ENCODE measurements at regions of chr11 and their contacts with region 1.

Region 1: GRCh38 chr11:92941676-92942571 is 27.5 kb upstream of the MTNR1B start:
- DNase-seq: peak; percentile 71
- H3K4me3 Mint-ChIP-seq: no peak overlapping the region
- H3K27ac Mint-ChIP-seq: no peak overlapping the region
- H3K4me1 Mint-ChIP-seq: no peaks in the 10 kb centered on the region
- H3K27me3 Mint-ChIP-seq: no peaks in the 10 kb centered on the region
- CTCF ChIP-seq: peak; percentile 78

Region 2: GRCh38 chr11:92870196-92870832 is 71.6 kb before region 1 on chr11:
- CTCF ChIA-PET with region 1: no interaction called
- POLR2A ChIA-PET with region 1: no interaction called
- intact Hi-C with region 1: no loop called
- DNase-seq: no peak
- H3K4me3 Mint-ChIP-seq: no peak overlapping the region
- H3K27ac Mint-ChIP-seq: no peak overlapping the region
- H3K4me1 Mint-ChIP-seq: peaks cover 3% of the 10 kb centered on the region
- H3K27me3 Mint-ChIP-seq: no peaks in the 10 kb centered on the region
- CTCF ChIP-seq: no peak

Region 3: DNA sequence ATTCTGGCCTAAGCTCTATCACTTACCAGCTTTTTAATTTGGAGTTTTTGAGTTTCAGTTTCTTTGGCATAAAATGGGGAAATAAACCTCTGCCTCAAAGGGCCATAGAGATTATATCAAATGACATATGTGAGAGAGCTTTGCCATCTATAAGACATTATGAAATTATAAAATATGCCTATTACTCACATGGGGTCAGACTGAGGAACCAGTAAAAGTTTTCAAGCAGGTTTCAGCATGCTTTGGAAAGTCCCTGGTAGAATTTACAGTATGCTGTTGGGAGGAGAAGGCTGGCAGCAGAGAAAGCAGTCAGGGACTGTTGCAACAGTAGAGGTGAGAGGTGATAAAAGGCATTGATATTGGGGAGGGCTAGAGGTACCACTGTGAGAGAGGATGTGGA is 13.9 kb after region 1 on chr11:
- CTCF ChIA-PET with region 1: interaction called, 40 read pairs
- POLR2A ChIA-PET with region 1: interaction called, 3 read pairs
- intact Hi-C with region 1: no loop called
- DNase-seq: peak; percentile 68
- H3K4me3 Mint-ChIP-seq: no peak overlapping the region
- H3K27ac Mint-ChIP-seq: no peak overlapping the region
- H3K4me1 Mint-ChIP-seq: peaks cover 7% of the 10 kb centered on the region
- H3K27me3 Mint-ChIP-seq: no peaks in the 10 kb centered on the region
- CTCF ChIP-seq: no peak

Region 4: GRCh38 chr11:93089474-93090102 is 147.7 kb after region 1 on chr11:
- CTCF ChIA-PET with region 1: interaction called, 5 read pairs
- POLR2A ChIA-PET with region 1: no interaction called
- intact Hi-C with region 1: loop called (anchors 1 kb)
- DNase-seq: peak; percentile 72
- H3K4me3 Mint-ChIP-seq: no peak overlapping the region
- H3K27ac Mint-ChIP-seq: no peak overlapping the region
- H3K4me1 Mint-ChIP-seq: no peaks in the 10 kb centered on the region
- H3K27me3 Mint-ChIP-seq: no peaks in the 10 kb centered on the region
- CTCF ChIP-seq: no peak

Region 5: DNA sequence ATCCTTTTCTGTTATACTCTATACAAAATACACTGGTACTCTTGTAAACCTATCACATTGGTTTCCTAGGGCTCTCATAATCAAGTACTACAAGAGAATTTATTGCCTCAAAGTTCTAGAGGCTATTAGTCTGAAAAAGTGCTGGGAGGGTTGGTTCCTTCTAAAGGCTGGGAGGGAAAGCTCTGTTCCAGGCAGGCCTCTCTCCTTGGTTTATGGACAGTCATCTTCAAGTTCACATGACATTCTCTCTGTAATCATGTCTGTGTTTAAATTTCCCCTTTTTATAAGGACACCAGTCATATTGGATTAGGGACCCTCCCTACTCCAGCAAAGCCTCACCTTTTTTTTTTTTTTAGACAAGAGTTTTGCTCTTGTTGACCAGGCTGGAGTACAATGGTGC is 246.8 kb after region 1 on chr11:
- CTCF ChIA-PET with region 1: interaction called, 11 read pairs
- POLR2A ChIA-PET with region 1: no interaction called
- intact Hi-C with region 1: no loop called
- DNase-seq: no peak
- H3K4me3 Mint-ChIP-seq: no peak overlapping the region
- H3K27ac Mint-ChIP-seq: no peak overlapping the region
- H3K4me1 Mint-ChIP-seq: peaks cover 2% of the 10 kb centered on the region
- H3K27me3 Mint-ChIP-seq: no peaks in the 10 kb centered on the region
- CTCF ChIP-seq: no peak

Region 6: GRCh38 chr11:93234602-93235207 is 292.8 kb after region 1 on chr11:
- CTCF ChIA-PET with region 1: interaction called, 118 read pairs
- POLR2A ChIA-PET with region 1: no interaction called
- intact Hi-C with region 1: no loop called
- DNase-seq: peak; percentile 80
- H3K4me3 Mint-ChIP-seq: no peak overlapping the region
- H3K27ac Mint-ChIP-seq: no peak overlapping the region
- H3K4me1 Mint-ChIP-seq: no peaks in the 10 kb centered on the region
- H3K27me3 Mint-ChIP-seq: peaks cover 22% of the 10 kb centered on the region
- CTCF ChIP-seq: peak; percentile 91